ENCODE measurements at regions of chr21 and their contacts with region 1.

Region 1: GRCh38 chr21:29195981-29196669 is 65.7 kb downstream of the MAP3K7CL start:
- DNase-seq: peak; percentile 95
- ATAC-seq: peak; percentile 98
- H3K4me3 ChIP-seq: peak overlapping the region; percentile 57
- H3K27ac ChIP-seq: peak overlapping the region; percentile 64
- H3K4me1 ChIP-seq: peaks cover 34% of the 10 kb centered on the region
- H3K27me3 ChIP-seq: no peaks in the 10 kb centered on the region
- CTCF ChIP-seq: peak; percentile 81

Region 2: GRCh38 chr21:27346041-27346448 is 1850.1 kb before region 1 on chr21:
- CTCF ChIA-PET with region 1: no interaction called
- POLR2A ChIA-PET with region 1: no interaction called
- intact Hi-C with region 1: no loop called
- DNase-seq: peak; percentile 29
- ATAC-seq: peak; percentile 44
- H3K4me3 ChIP-seq: no peak overlapping the region
- H3K27ac ChIP-seq: peak overlapping the region; percentile 53
- H3K4me1 ChIP-seq: no peaks in the 10 kb centered on the region
- H3K27me3 ChIP-seq: no peaks in the 10 kb centered on the region
- CTCF ChIP-seq: no peak

Region 3: DNA sequence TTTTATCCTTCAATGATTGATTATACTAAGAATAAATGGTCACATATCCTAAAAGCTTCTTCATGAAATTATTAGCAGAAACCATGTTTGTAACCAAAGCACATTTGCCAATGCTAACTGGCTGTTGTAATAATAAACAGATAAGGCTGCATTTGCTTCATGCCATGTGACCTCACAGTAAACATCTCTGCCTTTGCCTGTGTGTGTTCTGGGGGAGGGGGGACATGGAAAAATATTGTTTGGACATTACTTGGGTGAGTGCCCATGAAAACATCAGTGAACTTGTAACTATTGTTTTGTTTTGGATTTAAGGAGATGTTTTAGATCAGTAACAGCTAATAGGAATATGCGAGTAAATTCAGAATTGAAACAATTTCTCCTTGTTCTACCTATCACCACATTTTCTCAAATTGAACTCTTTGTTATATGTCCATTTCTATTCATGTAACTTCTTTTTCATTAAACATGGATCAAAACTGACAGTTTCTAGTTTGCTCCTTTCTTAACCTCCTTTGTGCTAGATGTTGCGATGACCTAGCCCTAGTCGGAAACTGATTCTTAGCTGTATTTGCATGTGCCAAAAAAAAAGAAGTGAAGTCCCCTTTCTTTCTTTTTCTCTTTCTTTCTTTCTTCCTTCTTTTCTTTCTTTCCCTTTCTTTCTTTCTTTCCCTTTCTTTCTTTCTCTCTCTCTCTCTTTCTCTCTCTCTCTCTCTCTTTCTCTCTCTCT is 20.6 kb before region 1 on chr21:
- CTCF ChIA-PET with region 1: no interaction called
- POLR2A ChIA-PET with region 1: interaction called, 4 read pairs
- intact Hi-C with region 1: loop called (anchors 2 kb)
- DNase-seq: peak; percentile 40
- ATAC-seq: peak; percentile 52
- H3K4me3 ChIP-seq: no peak overlapping the region
- H3K27ac ChIP-seq: no peak overlapping the region
- H3K4me1 ChIP-seq: peaks cover 19% of the 10 kb centered on the region
- H3K27me3 ChIP-seq: no peaks in the 10 kb centered on the region
- CTCF ChIP-seq: no peak

Region 4: GRCh38 chr21:29208682-29209059 is 12.5 kb after region 1 on chr21:
- CTCF ChIA-PET with region 1: no interaction called
- POLR2A ChIA-PET with region 1: interaction called, 4 read pairs
- intact Hi-C with region 1: loop called (anchors 1 kb)
- DNase-seq: peak; percentile 78
- ATAC-seq: peak; percentile 68
- H3K4me3 ChIP-seq: no peak overlapping the region
- H3K27ac ChIP-seq: peak overlapping the region; percentile 75
- H3K4me1 ChIP-seq: peaks cover 17% of the 10 kb centered on the region
- H3K27me3 ChIP-seq: no peaks in the 10 kb centered on the region
- CTCF ChIP-seq: no peak

Region 5: DNA sequence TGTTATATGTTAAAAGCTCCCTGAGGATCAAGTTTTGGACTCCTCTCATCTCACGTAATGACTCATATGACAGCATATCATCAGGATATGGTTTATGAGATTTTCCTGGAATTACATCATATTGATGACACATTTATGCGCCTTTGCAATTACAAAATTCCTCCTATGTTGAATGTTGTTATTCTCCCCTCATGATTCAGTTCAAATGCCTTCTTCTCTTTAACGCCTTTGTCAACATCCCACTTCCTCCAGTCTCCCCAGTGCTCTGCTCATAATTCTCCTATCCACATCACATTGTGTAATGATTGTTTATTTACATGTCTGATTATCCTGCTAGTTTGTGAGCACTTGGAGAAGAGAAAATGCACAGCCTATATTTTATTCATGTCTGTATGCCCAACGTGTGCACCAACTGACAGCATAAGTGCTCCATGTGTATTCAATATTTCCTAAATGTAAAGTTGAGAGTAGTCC is 21.7 kb after region 1 on chr21:
- CTCF ChIA-PET with region 1: no interaction called
- POLR2A ChIA-PET with region 1: no interaction called
- intact Hi-C with region 1: loop called (anchors 1 kb)
- DNase-seq: peak; percentile 98
- ATAC-seq: peak; percentile 92
- H3K4me3 ChIP-seq: peak overlapping the region; percentile 44; the same call in 1 of the 2 replicates
- H3K27ac ChIP-seq: peak overlapping the region; percentile 91
- H3K4me1 ChIP-seq: peaks cover 34% of the 10 kb centered on the region
- H3K27me3 ChIP-seq: no peaks in the 10 kb centered on the region
- CTCF ChIP-seq: no peak

Region 6: GRCh38 chr21:29786496-29787360 is 590.6 kb after region 1 on chr21:
- CTCF ChIA-PET with region 1: no interaction called
- POLR2A ChIA-PET with region 1: no interaction called
- intact Hi-C with region 1: no loop called
- DNase-seq: no peak
- ATAC-seq: no peak
- H3K4me3 ChIP-seq: no peak overlapping the region
- H3K27ac ChIP-seq: no peak overlapping the region
- H3K4me1 ChIP-seq: no peaks in the 10 kb centered on the region
- H3K27me3 ChIP-seq: peaks cover 13% of the 10 kb centered on the region; the same call in 1 of the 2 replicates
- CTCF ChIP-seq: no peak